Heart left ventricle (tissue), 16 donors: ENCODE measurements at regions of chr4 and their contacts with region 1.

Region 1: DNA sequence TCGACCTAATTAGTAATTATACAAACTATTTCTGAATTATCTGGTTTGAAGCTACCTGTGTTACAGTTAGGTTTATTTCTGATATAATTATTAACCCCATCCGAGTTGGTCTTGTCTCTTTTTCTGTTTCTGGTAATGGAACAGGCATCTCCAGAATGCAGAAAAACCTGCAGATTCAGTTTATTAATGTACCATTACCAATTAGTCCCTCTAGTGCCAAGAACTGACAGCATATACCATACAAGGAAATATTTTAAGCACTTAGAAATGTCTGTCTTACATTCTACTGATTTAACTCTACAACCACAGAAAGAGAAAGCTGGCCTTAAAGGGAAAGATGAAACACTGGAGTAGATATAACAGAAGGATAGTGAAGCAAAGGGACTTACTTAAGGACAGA is 570.6 kb downstream of the CENPC start:
- DNase-seq: no peak
- ATAC-seq: no peak
- H3K4me3 ChIP-seq: no peak overlapping the region
- H3K27ac ChIP-seq: no peak overlapping the region
- H3K4me1 ChIP-seq: no peaks in the 10 kb centered on the region
- H3K27me3 ChIP-seq: no peaks in the 10 kb centered on the region
- CTCF ChIP-seq: no peak
- POLR2A ChIP-seq: no peak

Region 2: DNA sequence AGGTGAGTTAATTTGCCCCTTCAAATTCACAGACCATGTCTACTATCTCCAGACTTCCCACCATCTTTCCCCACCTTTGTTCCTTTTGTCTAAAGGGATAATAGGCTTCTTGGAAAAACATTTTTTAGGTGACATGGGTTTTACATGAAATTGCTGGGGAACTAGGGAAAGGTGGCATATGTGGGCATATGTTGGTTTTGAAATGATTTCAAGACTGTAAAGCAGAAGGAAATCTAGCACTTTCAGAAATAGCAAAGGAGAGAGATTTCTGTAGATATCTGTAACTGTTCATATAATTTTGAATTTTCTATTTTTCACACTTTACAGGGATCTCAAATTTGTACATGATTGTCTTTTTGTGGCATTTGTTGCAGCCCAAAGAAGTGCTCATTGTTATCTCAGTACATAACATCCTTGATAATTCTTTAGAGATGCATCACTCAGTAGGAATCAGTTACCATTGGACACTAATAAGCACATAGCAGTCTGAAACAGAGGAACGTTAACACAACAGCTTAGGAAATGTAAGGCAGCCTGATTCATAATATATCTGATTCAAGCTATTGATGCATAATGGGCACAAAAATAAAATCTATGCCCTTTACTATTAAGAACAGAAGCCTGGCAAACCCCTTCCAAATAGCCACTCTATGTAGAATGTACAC is 89.0 kb before region 1 on chr4:
- intact Hi-C with region 1: no loop called
- DNase-seq: no peak
- ATAC-seq: no peak
- H3K4me3 ChIP-seq: no peak overlapping the region
- H3K27ac ChIP-seq: no peak overlapping the region
- H3K4me1 ChIP-seq: no peaks in the 10 kb centered on the region
- H3K27me3 ChIP-seq: no peaks in the 10 kb centered on the region
- CTCF ChIP-seq: no peak
- POLR2A ChIP-seq: no peak

Region 3: GRCh38 chr4:67019686-67020442 is 45.2 kb after region 1 on chr4:
- intact Hi-C with region 1: loop called in 1 of 10 experiments (anchors 5 kb)
- DNase-seq: peak in 2 of 5 donors; percentile 10 to 26
- ATAC-seq: peak in 2 of 4 donors; percentile 46 to 59
- H3K4me3 ChIP-seq: no peak overlapping the region
- H3K27ac ChIP-seq: peak overlapping the region in 4 of 12 donors; percentile 7 to 50 (median 36)
- H3K4me1 ChIP-seq: no peaks in the 10 kb centered on the region
- H3K27me3 ChIP-seq: no peaks in the 10 kb centered on the region
- CTCF ChIP-seq: no peak
- POLR2A ChIP-seq: no peak